Endothelial cell of umbilical vein (primary cell): ENCODE measurements at regions of chr19 and their contacts with region 1.

Region 1: GRCh38 chr19:13060964-13061927 is 41.4 kb downstream of the LYL1 start:
- DNase-seq: peak; percentile 79
- H3K4me3 ChIP-seq: peak overlapping the region; percentile 23 to 43 (median 33)
- H3K27ac ChIP-seq: no peak overlapping the region
- H3K4me1 ChIP-seq: peaks cover 24% of the 10 kb centered on the region
- H3K27me3 ChIP-seq: no peaks in the 10 kb centered on the region
- CTCF ChIP-seq: peak; percentile 98
- POLR2A ChIP-seq: no peak

Region 2: DNA sequence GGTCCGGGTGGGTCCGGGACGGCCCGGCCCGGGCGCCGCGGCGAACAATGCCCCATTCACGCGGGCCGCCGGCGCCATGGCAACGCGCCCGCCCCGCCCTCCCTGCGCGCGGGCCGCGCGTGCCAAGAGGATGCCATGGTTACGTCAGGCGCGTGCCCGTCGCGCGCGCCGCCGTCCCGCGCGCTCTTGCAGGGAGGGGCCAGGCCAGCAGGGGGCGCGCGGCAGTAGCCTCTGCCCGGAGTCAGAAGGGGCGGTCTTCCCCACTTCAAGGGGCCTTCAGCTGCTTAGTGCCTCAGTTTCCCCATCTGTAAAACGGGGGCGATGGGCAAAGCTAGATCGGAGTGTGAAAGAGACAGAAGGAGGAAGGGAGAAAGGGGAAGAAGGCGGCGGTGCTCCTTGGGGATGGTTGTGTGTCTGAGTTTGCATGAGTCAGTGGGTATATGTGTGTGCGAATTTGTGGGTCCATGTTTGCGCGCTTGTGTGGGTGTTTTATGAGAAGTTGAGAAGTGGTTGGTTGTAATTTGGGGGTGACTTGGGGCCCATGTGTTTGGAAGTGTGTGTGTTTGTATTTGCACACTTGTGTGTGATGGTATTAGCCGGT is 77.6 kb before region 1 on chr19:
- CTCF ChIA-PET with region 1: interaction called, 274 read pairs
- POLR2A ChIA-PET with region 1: no interaction called
- dilution Hi-C with region 1: no loop called
- intact Hi-C with region 1: loop called (anchors 1 kb)
- DNase-seq: peak; percentile 83
- H3K4me3 ChIP-seq: peak overlapping the region in 2 of 3 experiments; percentile 23 to 35
- H3K27ac ChIP-seq: no peak overlapping the region
- H3K4me1 ChIP-seq: peaks cover 2% of the 10 kb centered on the region
- H3K27me3 ChIP-seq: no peaks in the 10 kb centered on the region
- CTCF ChIP-seq: peak; percentile 91 to 92
- POLR2A ChIP-seq: no peak

Region 3: DNA sequence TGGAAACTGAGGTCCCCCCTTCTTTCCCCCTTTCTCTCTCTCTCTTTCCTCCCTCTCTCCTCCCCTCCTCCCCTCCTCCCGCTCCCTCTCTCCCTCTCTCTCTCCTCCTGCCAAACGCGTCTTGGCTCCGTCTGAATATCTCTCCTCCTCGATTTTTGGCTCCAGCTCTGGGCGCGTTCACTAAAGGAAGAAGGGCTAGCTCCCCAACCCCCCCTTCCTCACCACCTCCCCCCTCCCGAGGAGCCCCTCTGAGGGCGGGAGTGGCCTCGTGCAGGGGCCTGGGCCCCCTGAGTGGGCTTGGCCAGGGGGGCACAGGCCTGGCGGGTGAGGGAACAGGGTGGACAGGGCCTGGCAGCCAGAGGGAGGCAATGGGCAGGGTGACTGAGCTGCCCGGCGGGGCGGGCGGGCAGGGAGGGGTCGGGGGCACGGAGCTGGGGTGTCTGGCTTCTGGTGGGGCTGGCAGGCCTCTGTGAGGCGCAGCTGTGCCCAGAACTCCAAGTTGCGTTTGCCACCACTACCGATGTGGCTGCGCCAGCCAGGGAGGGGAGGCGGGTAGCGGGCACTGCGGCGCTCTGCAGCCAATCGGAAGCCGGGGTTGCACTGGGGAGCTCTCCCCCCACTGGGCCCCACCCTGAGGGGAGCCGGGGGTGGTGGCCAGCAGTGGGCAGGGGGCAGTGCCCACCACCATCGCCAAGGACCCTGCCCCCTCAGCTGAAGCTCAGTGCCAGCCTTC is 58.9 kb before region 1 on chr19:
- CTCF ChIA-PET with region 1: interaction called, 26 read pairs
- POLR2A ChIA-PET with region 1: no interaction called
- dilution Hi-C with region 1: no loop called
- intact Hi-C with region 1: no loop called
- DNase-seq: no peak
- H3K4me3 ChIP-seq: no peak overlapping the region
- H3K27ac ChIP-seq: no peak overlapping the region
- H3K4me1 ChIP-seq: no peaks in the 10 kb centered on the region
- H3K27me3 ChIP-seq: no peaks in the 10 kb centered on the region
- CTCF ChIP-seq: no peak
- POLR2A ChIP-seq: no peak

Region 4: GRCh38 chr19:13022859-13023636 is 38.2 kb before region 1 on chr19:
- CTCF ChIA-PET with region 1: interaction called, 463 read pairs
- POLR2A ChIA-PET with region 1: interaction called, 8 read pairs
- dilution Hi-C with region 1: no loop called
- intact Hi-C with region 1: loop called (anchors 5 kb)
- DNase-seq: peak; percentile 80
- H3K4me3 ChIP-seq: peak overlapping the region; percentile 28 to 84 (median 59)
- H3K27ac ChIP-seq: peak overlapping the region; percentile 33
- H3K4me1 ChIP-seq: peaks cover 52% of the 10 kb centered on the region
- H3K27me3 ChIP-seq: no peaks in the 10 kb centered on the region
- CTCF ChIP-seq: no peak
- POLR2A ChIP-seq: peak; percentile 31

Region 5: DNA sequence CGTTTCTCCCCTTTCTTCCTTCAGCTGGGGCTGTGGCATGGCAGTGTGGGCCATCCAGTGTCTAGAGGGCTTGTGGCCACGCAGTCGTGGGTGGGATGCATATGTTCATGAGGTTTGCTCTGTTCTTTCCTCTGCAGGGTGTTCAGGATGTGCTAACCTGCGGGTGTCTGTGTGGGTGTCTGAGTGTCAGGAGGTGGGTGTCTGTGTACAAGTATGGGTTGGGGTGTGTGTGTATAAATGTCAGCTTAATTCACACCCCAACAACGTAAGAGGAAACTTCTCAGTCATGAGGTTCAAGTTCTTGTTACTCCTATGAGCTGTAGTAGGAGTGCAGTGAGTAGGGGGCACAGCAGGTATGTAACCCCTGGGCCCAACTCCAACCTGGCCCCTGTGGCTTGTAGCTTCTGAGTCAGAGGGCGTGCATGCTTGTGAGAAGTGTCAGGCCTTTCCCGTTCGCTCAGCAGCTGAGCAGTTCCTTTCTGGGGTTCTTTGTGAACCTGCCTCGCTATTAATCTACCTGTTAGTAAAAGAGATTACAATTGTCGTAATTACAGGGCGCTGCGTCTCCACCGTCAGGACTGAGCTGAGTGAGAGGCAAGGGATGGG is 16.9 kb before region 1 on chr19:
- CTCF ChIA-PET with region 1: interaction called, 53 read pairs
- POLR2A ChIA-PET with region 1: no interaction called
- dilution Hi-C with region 1: no loop called
- intact Hi-C with region 1: no loop called
- DNase-seq: no peak
- H3K4me3 ChIP-seq: no peak overlapping the region
- H3K27ac ChIP-seq: no peak overlapping the region
- H3K4me1 ChIP-seq: no peaks in the 10 kb centered on the region
- H3K27me3 ChIP-seq: no peaks in the 10 kb centered on the region
- CTCF ChIP-seq: no peak
- POLR2A ChIP-seq: no peak

Region 6: DNA sequence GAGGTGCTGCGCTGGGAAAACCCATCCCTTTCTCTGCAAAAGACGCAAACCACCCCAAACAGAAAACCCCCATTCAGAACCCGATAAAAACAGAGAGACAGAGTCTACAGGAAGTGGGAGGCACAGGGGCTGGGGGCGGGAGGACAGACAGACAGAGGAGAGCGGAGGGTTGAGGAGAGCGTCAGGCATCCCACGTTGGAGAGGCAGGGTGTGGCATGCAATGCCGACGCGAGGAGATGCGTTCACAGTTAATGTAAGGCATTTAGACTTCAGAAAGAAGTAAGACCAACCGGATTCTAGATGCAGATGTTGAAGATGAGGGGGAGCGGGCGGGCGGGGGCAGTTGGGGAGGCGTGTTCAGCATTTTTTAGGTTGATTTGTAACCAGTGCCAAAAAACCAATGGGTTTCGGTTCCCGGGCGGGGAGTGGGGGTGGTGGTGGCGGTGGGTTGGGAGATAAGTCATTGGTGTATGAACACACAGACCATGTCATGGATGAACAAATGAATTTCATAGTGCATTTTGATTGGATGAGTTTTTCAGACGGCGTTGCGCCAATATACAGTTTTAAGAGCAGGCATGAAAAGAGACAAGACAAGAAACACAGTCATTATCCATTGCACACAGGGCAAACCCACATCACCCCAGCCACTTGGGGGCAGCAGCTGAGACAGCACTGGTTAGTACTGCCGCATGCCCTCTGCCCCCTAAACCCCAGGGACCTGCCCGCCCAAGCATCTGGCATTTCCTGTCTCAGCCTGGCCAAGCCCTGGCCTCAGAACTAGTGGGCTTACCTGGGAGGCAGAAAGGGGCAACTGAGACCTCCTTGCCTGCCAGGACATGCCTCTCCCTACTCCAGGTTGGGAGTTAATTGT is 180.2 kb after region 1 on chr19:
- CTCF ChIA-PET with region 1: no interaction called
- POLR2A ChIA-PET with region 1: no interaction called
- dilution Hi-C with region 1: no loop called
- intact Hi-C with region 1: no loop called
- DNase-seq: no peak
- H3K4me3 ChIP-seq: no peak overlapping the region
- H3K27ac ChIP-seq: no peak overlapping the region
- H3K4me1 ChIP-seq: no peaks in the 10 kb centered on the region
- H3K27me3 ChIP-seq: no peaks in the 10 kb centered on the region
- CTCF ChIP-seq: no peak
- POLR2A ChIP-seq: no peak